Activated naive CD4-positive, alpha-beta T cell treated with anti-CD3 and anti-CD28 coated beads for 36 hours (primary cell): ENCODE measurements at regions of chr9 and their contacts with region 1.

Region 1: DNA sequence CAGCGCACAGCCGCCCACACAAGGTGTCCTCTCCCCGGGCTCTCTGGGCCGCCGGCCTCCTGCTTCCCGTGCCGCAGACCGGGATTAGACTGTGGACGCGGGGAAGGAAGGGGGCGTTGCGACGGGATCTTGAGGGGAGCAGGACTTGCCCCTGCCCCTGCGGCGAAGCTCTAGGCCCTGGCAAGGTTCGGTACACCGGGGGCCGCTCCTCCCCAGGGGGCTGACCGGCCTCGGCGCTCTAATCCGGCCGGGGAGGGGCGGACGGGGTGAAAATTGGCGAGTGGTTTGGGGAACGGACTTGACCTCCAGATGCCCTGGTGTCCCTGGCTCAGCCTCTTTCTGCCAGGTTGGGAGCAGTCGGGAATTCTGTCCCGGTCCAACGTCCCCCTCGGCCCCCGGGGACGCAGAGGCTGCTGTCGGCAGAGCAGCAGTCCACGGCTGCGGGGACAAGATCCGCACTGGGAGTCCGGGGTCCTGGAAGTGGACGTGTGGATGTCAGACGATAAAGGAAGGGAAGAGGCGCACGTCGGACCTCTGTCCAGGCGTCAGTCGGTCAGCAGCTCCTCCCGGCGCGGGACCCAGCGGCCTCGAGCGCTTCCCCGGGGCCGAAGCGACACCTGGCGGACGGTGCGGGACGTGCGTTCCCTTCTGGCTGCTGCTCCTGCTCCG is 1.9 kb upstream of the CNTFR start:
- DNase-seq: peak; percentile 83
- H3K4me3 Mint-ChIP-seq: peak overlapping the region; percentile 58
- H3K27ac Mint-ChIP-seq: no peak overlapping the region
- H3K4me1 Mint-ChIP-seq: peaks cover 22% of the 10 kb centered on the region
- H3K27me3 Mint-ChIP-seq: peaks cover 68% of the 10 kb centered on the region

Region 2: GRCh38 chr9:34048923-34049697 is 542.3 kb before region 1 on chr9:
- CTCF ChIA-PET with region 1: no interaction called
- intact Hi-C with region 1: no loop called
- DNase-seq: peak; percentile 98
- H3K4me3 Mint-ChIP-seq: peak overlapping the region; percentile 91
- H3K27ac Mint-ChIP-seq: peak overlapping the region; percentile 98
- H3K4me1 Mint-ChIP-seq: peaks cover 33% of the 10 kb centered on the region
- H3K27me3 Mint-ChIP-seq: no peaks in the 10 kb centered on the region

Region 3: GRCh38 chr9:34145165-34145564 is 446.2 kb before region 1 on chr9:
- CTCF ChIA-PET with region 1: no interaction called
- intact Hi-C with region 1: no loop called
- DNase-seq: no peak
- H3K4me3 Mint-ChIP-seq: no peak overlapping the region
- H3K27ac Mint-ChIP-seq: no peak overlapping the region
- H3K4me1 Mint-ChIP-seq: no peaks in the 10 kb centered on the region
- H3K27me3 Mint-ChIP-seq: no peaks in the 10 kb centered on the region

Region 4: GRCh38 chr9:34310205-34310604 is 281.2 kb before region 1 on chr9:
- CTCF ChIA-PET with region 1: no interaction called
- intact Hi-C with region 1: no loop called
- DNase-seq: no peak
- H3K4me3 Mint-ChIP-seq: no peak overlapping the region
- H3K27ac Mint-ChIP-seq: no peak overlapping the region
- H3K4me1 Mint-ChIP-seq: no peaks in the 10 kb centered on the region
- H3K27me3 Mint-ChIP-seq: no peaks in the 10 kb centered on the region

Region 5: GRCh38 chr9:34437006-34437925 is 154.1 kb before region 1 on chr9:
- CTCF ChIA-PET with region 1: interaction called, 8 read pairs
- intact Hi-C with region 1: loop called (anchors 1 kb)
- DNase-seq: peak; percentile 78
- H3K4me3 Mint-ChIP-seq: no peak overlapping the region
- H3K27ac Mint-ChIP-seq: peak overlapping the region; percentile 12
- H3K4me1 Mint-ChIP-seq: peaks cover 7% of the 10 kb centered on the region
- H3K27me3 Mint-ChIP-seq: no peaks in the 10 kb centered on the region

Region 6: GRCh38 chr9:34522971-34523797 is 68.2 kb before region 1 on chr9 and contains the start of gene ENHO:
- CTCF ChIA-PET with region 1: interaction called, 3 read pairs
- intact Hi-C with region 1: loop called (anchors 2 kb)
- DNase-seq: peak; percentile 88
- H3K4me3 Mint-ChIP-seq: peak within 1 kb of the TSS; percentile 57
- H3K27ac Mint-ChIP-seq: no peak within 1 kb of the TSS
- H3K4me1 Mint-ChIP-seq: peaks cover 22% of the 10 kb centered on the region
- H3K27me3 Mint-ChIP-seq: peaks cover 11% of the 10 kb centered on the region
- total RNA-seq, gene ENHO: 0.19 to 0.27 TPM

Region 7: DNA sequence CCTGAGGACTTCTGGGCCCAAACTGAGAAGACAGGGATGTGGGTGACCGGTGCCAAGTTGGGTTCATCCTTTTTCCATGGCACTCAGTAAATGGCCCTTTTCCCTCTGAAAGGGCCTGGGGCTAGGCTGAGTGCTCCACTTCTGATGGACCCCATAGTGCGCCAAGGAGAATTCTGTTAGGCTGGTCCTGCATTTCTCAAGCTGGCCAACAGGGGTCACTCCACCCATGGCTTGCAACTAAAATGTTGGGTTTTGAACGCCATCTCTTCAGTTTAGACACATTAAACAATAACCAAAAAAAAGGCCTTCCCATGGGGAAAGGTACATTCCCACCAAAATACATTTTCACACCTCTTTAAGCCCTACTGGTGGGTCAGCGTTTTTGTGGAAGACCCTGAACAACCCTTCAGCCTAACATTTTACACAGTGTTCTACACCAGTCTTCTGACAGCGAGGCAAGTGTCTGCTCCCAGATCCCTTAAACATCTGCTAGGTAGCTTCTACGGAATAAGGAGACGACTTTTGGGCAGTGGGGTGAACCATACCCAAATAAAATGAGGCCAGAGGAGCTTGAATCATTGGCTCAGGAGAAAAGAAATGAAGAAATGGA is 29.1 kb before region 1 on chr9:
- CTCF ChIA-PET with region 1: interaction called, 26 read pairs
- intact Hi-C with region 1: loop called (anchors 1 kb)
- DNase-seq: peak; percentile 50
- H3K4me3 Mint-ChIP-seq: no peak overlapping the region
- H3K27ac Mint-ChIP-seq: no peak overlapping the region
- H3K4me1 Mint-ChIP-seq: no peaks in the 10 kb centered on the region
- H3K27me3 Mint-ChIP-seq: peaks cover 23% of the 10 kb centered on the region

Region 8: DNA sequence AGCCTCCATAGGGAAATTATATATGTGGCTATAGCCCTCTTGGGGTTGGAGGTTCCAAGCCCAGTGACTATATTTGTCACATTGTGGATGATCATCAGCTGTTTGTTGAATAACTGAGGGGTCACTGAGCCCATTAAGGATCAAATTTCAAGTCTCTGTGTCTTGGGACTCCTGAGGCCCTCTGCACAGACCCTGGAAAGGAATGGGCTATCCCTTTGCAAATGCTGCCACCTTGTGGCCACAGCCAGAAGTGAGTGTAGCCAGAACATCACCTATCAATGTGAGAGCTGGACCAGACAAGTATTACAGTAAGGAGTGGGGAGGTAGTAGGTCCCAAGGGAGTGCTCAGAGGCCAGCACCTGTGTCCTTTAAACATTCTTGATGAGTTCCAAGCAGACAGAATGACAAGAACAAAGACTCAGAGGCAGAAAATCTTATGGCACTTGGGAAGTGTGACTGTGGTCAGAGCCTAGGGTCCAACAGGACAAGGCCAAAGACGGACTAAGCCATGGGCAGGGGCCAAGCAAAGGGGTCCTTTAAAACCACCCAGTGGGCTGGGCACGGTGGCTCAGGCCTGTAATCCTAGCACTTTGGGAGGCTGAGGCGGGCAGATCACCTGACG is 12.3 kb after region 1 on chr9:
- CTCF ChIA-PET with region 1: interaction called, 21 read pairs
- intact Hi-C with region 1: no loop called
- DNase-seq: peak; percentile 89
- H3K4me3 Mint-ChIP-seq: no peak overlapping the region
- H3K27ac Mint-ChIP-seq: no peak overlapping the region
- H3K4me1 Mint-ChIP-seq: no peaks in the 10 kb centered on the region
- H3K27me3 Mint-ChIP-seq: no peaks in the 10 kb centered on the region

Region 9: DNA sequence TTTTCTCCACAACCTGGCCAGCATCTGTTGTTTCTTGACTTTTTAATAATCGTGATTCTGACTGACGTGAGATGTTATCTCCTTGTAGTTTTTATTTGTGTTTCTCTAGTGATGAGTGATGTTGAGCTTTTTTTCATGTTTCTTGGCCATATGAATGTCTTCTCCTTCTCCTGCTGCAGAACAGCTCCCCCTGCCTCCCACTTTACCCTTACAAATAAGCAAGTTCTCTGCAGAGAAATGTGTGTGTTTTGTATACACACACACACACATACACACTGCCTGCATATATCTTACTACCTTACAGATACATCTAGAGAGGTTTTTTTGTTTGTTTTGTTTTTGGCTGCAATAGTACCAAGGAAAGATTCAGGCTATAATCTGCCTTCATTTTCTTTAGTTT is 278.0 kb after region 1 on chr9:
- CTCF ChIA-PET with region 1: no interaction called
- intact Hi-C with region 1: no loop called
- DNase-seq: peak; percentile 23
- H3K4me3 Mint-ChIP-seq: no peak overlapping the region
- H3K27ac Mint-ChIP-seq: no peak overlapping the region
- H3K4me1 Mint-ChIP-seq: no peaks in the 10 kb centered on the region
- H3K27me3 Mint-ChIP-seq: peaks cover 13% of the 10 kb centered on the region